Brain microvascular endothelial cell (primary cell): ENCODE measurements at regions of chr2 and their contacts with region 1.

Region 1: GRCh38 chr2:20962939-20963557 is 80.8 kb downstream of the APOB start:
- DNase-seq: peak; percentile 54
- H3K4me3 ChIP-seq: no peak overlapping the region
- H3K27ac ChIP-seq: no peak overlapping the region
- H3K27me3 ChIP-seq: peaks cover 23% of the 10 kb centered on the region
- CTCF ChIP-seq: peak; percentile 91

Region 2: GRCh38 chr2:20496081-20496876 is 466.8 kb before region 1 on chr2:
- in situ Hi-C with region 1: no loop called
- DNase-seq: peak; percentile 59
- H3K4me3 ChIP-seq: no peak overlapping the region
- H3K27ac ChIP-seq: no peak overlapping the region
- H3K27me3 ChIP-seq: no peaks in the 10 kb centered on the region
- CTCF ChIP-seq: no peak

Region 3: DNA sequence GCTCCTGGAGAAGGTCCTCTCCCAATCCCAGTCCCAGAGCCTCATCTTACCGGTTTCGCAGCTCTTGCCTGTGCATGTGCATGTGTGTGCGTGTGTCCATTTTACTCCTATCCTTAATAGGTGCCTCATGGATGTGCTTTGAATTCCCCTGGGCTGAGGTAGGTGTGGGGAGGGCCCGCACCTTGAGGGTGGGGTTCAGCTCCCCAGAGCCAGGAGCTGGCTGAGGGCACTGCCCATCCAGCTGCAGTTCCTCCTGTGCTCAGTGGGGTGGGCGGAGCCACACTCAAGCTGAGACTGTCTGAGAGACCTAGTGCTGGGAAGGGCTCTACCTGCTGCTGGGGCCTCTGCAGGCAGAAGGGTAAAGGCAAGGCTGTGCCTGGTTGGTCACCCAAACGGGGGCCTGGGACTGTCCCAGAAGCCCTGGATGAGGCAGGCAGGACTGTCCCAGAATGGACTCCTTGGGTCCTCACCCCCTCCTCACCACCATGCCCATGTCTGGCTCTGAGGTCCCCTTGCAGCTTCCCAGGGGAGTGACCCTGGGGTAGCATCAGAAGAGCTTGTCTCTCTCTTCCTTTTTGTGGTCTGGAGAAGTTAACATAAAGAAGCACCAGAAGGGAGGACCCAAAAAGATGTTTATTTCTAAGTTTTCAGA is 287.2 kb before region 1 on chr2:
- in situ Hi-C with region 1: loop called (anchors 25 kb)
- DNase-seq: no peak
- H3K4me3 ChIP-seq: no peak overlapping the region
- H3K27ac ChIP-seq: no peak overlapping the region
- H3K27me3 ChIP-seq: peaks cover 13% of the 10 kb centered on the region
- CTCF ChIP-seq: peak; percentile 7